ENCODE measurements at regions of chr18 and their contacts with region 1.

Region 1: DNA sequence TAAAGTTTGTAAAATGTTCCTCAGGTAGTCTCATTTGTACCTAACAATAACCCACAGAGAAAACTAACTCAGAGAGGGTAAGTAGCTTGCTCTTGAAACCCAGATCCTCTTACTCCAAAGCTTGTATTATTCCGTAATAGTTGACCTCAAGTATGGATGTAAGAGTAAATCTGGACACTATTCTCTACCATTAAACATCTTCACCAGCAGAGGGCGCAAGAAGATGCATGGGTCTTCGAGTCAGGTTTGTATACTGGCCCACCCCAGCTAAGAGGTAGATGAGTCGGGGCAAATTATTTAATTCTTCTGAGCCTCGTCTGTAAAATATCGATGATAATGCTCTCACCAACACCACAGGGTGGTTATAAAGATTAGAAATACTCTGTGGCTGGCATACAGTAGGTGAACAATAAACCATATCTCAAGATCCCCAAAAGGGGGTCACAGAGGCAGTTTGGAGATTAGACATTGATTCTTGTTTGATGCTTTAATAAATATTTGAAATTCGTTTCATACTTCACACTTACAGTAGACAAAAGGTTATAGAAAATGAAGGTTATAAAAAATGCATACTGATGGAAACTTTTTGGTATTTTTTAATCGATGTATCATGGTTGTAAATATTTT is 3.5 kb upstream of the CABLES1 start:
- DNase-seq: peak in 8 of 9 donors; percentile 33 to 73 (median 58)
- ATAC-seq: peak; percentile 64
- H3K4me3 ChIP-seq: no peak overlapping the region
- H3K4me3 Mint-ChIP-seq: no peak overlapping the region
- H3K27ac ChIP-seq: no peak overlapping the region
- H3K27ac Mint-ChIP-seq: peak overlapping the region in 1 of 9 donors; percentile 9
- H3K4me1 ChIP-seq: peaks cover 0 to 14% of the 10 kb centered on the region in 2 donors
- H3K4me1 Mint-ChIP-seq: peaks cover 0 to 20% (median 15%) of the 10 kb centered on the region in 7 donors
- H3K27me3 ChIP-seq: peaks cover 3 to 9% of the 10 kb centered on the region in 2 donors
- H3K27me3 Mint-ChIP-seq: peaks cover 16 to 30% (median 25%) of the 10 kb centered on the region in 5 donors

Region 2: GRCh38 chr18:23071285-23071684 is 60.5 kb before region 1 on chr18:
- CTCF ChIA-PET with region 1: interaction called, 3 read pairs
- POLR2A ChIA-PET with region 1: no interaction called
- intact Hi-C with region 1: loop called (anchors 1 to 2 kb)
- DNase-seq: peak; percentile 49 to 94 (median 92)
- ATAC-seq: peak; percentile 99
- H3K4me3 ChIP-seq: peak overlapping the region; percentile 12
- H3K4me3 Mint-ChIP-seq: peak overlapping the region; percentile 73 to 91 (median 78)
- H3K27ac ChIP-seq: peak overlapping the region; percentile 18
- H3K27ac Mint-ChIP-seq: peak overlapping the region; percentile 69 to 94 (median 91)
- H3K4me1 ChIP-seq: peaks cover 44 to 50% of the 10 kb centered on the region in 2 donors
- H3K4me1 Mint-ChIP-seq: peaks cover 46 to 83% (median 77%) of the 10 kb centered on the region in 7 donors
- H3K27me3 ChIP-seq: no peaks in the 10 kb centered on the region
- H3K27me3 Mint-ChIP-seq: peaks cover 0 to 3% (median 0%) of the 10 kb centered on the region in 5 donors

Region 3: GRCh38 chr18:23183411-23184155 is 51.8 kb after region 1 on chr18:
- CTCF ChIA-PET with region 1: no interaction called
- POLR2A ChIA-PET with region 1: no interaction called
- intact Hi-C with region 1: loop called in 1 of 2 experiments (anchors 10 kb)
- DNase-seq: no peak
- ATAC-seq: no peak
- H3K4me3 ChIP-seq: no peak overlapping the region
- H3K4me3 Mint-ChIP-seq: no peak overlapping the region
- H3K27ac ChIP-seq: no peak overlapping the region
- H3K27ac Mint-ChIP-seq: peak overlapping the region in 1 of 9 donors; percentile 65
- H3K4me1 ChIP-seq: no peaks in the 10 kb centered on the region
- H3K4me1 Mint-ChIP-seq: peaks cover 0 to 8% (median 7%) of the 10 kb centered on the region in 7 donors
- H3K27me3 ChIP-seq: no peaks in the 10 kb centered on the region
- H3K27me3 Mint-ChIP-seq: peaks cover 0 to 3% (median 0%) of the 10 kb centered on the region in 5 donors

Region 4: GRCh38 chr18:23356915-23357601 is 225.3 kb after region 1 on chr18:
- CTCF ChIA-PET with region 1: interaction called, 3 read pairs
- POLR2A ChIA-PET with region 1: no interaction called
- intact Hi-C with region 1: loop called (anchors 1 kb)
- DNase-seq: no peak
- ATAC-seq: no peak
- H3K4me3 ChIP-seq: no peak overlapping the region
- H3K4me3 Mint-ChIP-seq: no peak overlapping the region
- H3K27ac ChIP-seq: no peak overlapping the region
- H3K27ac Mint-ChIP-seq: no peak overlapping the region
- H3K4me1 ChIP-seq: peaks cover 0 to 7% of the 10 kb centered on the region in 2 donors
- H3K4me1 Mint-ChIP-seq: peaks cover 5 to 21% (median 12%) of the 10 kb centered on the region in 7 donors
- H3K27me3 ChIP-seq: no peaks in the 10 kb centered on the region
- H3K27me3 Mint-ChIP-seq: no peaks in the 10 kb centered on the region

Region 5: GRCh38 chr18:23406271-23406787 is 274.5 kb after region 1 on chr18:
- CTCF ChIA-PET with region 1: interaction called, 5 read pairs
- POLR2A ChIA-PET with region 1: interaction called, 3 read pairs
- intact Hi-C with region 1: loop called in 1 of 2 experiments (anchors 1 kb)
- DNase-seq: no peak
- ATAC-seq: no peak
- H3K4me3 ChIP-seq: no peak overlapping the region
- H3K4me3 Mint-ChIP-seq: no peak overlapping the region
- H3K27ac ChIP-seq: no peak overlapping the region
- H3K27ac Mint-ChIP-seq: no peak overlapping the region
- H3K4me1 ChIP-seq: no peaks in the 10 kb centered on the region
- H3K4me1 Mint-ChIP-seq: peaks cover 0 to 7% (median 1%) of the 10 kb centered on the region in 7 donors
- H3K27me3 ChIP-seq: no peaks in the 10 kb centered on the region
- H3K27me3 Mint-ChIP-seq: no peaks in the 10 kb centered on the region

Region 6: DNA sequence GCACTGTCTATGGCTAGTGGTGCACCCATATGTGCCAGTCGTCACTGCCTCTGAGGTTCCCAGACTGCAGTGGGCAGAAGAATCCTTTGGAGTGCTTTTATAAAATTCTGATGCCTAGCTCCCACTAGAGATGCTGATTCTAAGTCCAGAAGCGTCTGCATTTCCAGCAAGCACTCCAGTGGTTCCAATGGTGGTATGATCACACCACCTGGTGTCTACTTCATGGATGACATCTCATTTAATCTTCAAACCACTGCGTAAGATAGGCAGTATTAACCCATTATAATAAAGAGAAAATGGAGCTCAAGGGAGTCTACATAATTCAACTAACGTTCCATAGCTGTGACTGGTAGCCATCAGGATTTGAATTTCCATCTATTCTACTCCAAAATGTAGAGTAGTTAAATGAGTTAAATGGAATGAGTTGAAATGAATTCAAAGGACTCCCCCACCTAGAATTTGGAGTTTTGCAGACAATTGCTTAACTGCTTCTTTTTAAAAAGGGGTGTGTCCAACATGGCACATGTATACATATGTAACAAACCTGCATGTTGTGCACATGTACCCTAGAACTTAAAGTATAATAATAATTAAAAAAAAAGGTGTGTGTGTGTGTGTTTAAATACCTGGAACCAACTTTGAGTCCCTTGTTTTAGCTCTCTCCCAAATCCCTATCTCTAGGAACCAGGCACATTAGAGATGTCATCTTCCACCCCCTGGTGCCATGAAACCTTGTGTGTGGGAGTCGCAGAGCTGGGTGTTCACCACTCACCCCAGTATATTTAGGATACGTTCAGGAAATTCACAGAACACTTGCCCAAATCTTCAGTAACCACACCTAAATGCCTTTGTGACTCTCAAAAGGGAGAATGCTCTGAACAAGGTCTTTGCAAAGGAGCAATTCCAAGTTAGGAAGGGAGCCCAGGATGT is 571.5 kb after region 1 on chr18:
- CTCF ChIA-PET with region 1: no interaction called
- POLR2A ChIA-PET with region 1: no interaction called
- intact Hi-C with region 1: loop called in 1 of 2 experiments (anchors 5 kb)
- DNase-seq: peak in 7 of 9 donors; percentile 18 to 62 (median 47)
- ATAC-seq: peak; percentile 77
- H3K4me3 ChIP-seq: no peak overlapping the region
- H3K4me3 Mint-ChIP-seq: no peak overlapping the region
- H3K27ac ChIP-seq: no peak overlapping the region
- H3K27ac Mint-ChIP-seq: no peak overlapping the region
- H3K4me1 ChIP-seq: no peaks in the 10 kb centered on the region
- H3K4me1 Mint-ChIP-seq: no peaks in the 10 kb centered on the region
- H3K27me3 ChIP-seq: no peaks in the 10 kb centered on the region
- H3K27me3 Mint-ChIP-seq: peaks cover 8 to 65% (median 21%) of the 10 kb centered on the region in 5 donors

Region 7: GRCh38 chr18:24570716-24571115 is 1438.9 kb after region 1 on chr18:
- CTCF ChIA-PET with region 1: no interaction called
- POLR2A ChIA-PET with region 1: no interaction called
- intact Hi-C with region 1: no loop called
- DNase-seq: no peak
- ATAC-seq: no peak
- H3K4me3 ChIP-seq: no peak overlapping the region
- H3K4me3 Mint-ChIP-seq: no peak overlapping the region
- H3K27ac ChIP-seq: no peak overlapping the region
- H3K27ac Mint-ChIP-seq: no peak overlapping the region
- H3K4me1 ChIP-seq: no peaks in the 10 kb centered on the region
- H3K4me1 Mint-ChIP-seq: peaks cover 0 to 3% (median 0%) of the 10 kb centered on the region in 7 donors
- H3K27me3 ChIP-seq: no peaks in the 10 kb centered on the region
- H3K27me3 Mint-ChIP-seq: peaks cover 0 to 10% (median 4%) of the 10 kb centered on the region in 5 donors

Region 8: DNA sequence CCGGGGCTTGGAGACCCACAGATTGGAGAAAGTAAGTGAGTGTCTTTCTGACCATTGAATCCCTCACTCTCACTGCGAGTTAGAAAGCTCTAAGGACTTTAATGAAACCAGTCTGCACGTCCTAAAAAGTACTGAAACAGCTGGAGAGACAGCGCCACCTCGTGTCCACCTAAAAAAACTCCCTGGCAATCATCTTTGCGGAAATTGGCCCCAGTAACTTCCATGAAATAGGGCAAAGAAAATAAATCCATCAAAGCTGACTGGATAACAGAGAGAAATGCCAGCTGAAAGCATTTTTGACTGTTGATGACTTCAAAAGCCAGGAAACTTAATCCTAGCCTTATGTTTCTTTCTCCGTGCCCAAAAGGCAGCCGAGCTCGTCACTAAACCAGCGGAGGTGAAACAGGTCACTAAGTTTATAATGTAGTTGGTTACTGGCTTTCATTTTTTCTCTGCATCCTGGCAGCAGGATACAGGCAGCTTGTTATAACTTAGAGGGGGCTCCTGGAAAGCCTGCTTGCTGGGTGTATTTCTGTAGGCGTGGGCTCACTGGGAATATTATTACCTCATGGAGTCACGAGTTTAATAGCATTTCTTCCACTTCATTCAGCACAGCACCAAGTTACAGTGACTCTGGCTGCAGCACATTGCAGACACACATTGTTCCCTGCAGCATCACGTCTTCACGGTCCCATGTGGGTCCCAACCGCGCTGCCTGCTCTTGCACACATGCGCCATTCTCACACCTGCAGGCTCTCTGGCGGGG is 1595.1 kb after region 1 on chr18:
- CTCF ChIA-PET with region 1: no interaction called
- POLR2A ChIA-PET with region 1: no interaction called
- intact Hi-C with region 1: no loop called
- DNase-seq: peak in 8 of 9 donors; percentile 8 to 53 (median 38)
- ATAC-seq: no peak
- H3K4me3 ChIP-seq: no peak overlapping the region
- H3K4me3 Mint-ChIP-seq: peak overlapping the region in 1 of 10 donors; percentile 6
- H3K27ac ChIP-seq: no peak overlapping the region
- H3K27ac Mint-ChIP-seq: no peak overlapping the region
- H3K4me1 ChIP-seq: peaks cover 0 to 5% of the 10 kb centered on the region in 2 donors
- H3K4me1 Mint-ChIP-seq: peaks cover 0 to 3% (median 0%) of the 10 kb centered on the region in 7 donors
- H3K27me3 ChIP-seq: peaks cover 0 to 2% of the 10 kb centered on the region in 2 donors
- H3K27me3 Mint-ChIP-seq: peaks cover 0 to 27% (median 15%) of the 10 kb centered on the region in 5 donors

Measured in naive thymus-derived CD4-positive, alpha-beta T cell (primary cell).